ENCODE measurements at regions of chr18 and their contacts with region 1.

Region 1: GRCh38 chr18:42114310-42114943 is 159.4 kb downstream of the PIK3C3 start:
- DNase-seq: peak; percentile 56
- H3K4me3 ChIP-seq: no peak overlapping the region
- H3K27ac ChIP-seq: no peak overlapping the region
- H3K27me3 ChIP-seq: no peaks in the 10 kb centered on the region
- CTCF ChIP-seq: peak; percentile 92

Region 2: GRCh38 chr18:41936471-41937134 is 177.8 kb before region 1 on chr18:
- CTCF ChIA-PET with region 1: no interaction called
- POLR2A ChIA-PET with region 1: no interaction called
- DNase-seq: no peak
- H3K4me3 ChIP-seq: no peak overlapping the region
- H3K27ac ChIP-seq: peak overlapping the region; percentile 41
- H3K27me3 ChIP-seq: no peaks in the 10 kb centered on the region
- CTCF ChIP-seq: no peak

Region 3: DNA sequence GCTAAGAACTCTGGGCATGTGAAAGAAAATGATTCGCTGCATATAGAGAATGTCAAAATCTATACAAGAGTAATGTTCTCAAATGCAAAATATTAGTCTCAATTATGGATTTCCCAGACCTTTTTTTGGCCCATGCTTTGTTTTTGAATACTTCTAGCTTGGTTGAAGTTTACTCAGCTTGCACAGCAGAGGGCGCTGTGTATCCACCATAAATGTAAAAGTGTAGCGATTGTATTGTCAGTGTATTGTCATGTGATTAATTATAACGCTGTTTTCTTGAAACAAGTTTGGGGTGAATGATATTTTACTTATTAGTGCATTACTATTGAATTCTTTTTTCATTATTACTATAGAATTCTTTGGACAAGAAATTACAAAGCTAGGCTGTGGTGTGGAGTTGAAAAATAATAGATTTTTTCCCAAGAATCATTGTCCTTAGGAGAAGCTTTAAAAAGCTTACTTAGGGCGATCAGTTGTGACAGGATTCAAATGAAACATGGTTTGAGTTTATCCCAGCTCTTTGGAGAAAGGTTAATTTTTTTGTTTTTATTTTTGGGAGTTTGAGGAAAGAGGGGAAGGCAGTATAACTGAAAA is 61.1 kb before region 1 on chr18:
- CTCF ChIA-PET with region 1: interaction called, 91 read pairs
- POLR2A ChIA-PET with region 1: no interaction called
- DNase-seq: no peak
- H3K4me3 ChIP-seq: no peak overlapping the region
- H3K27ac ChIP-seq: no peak overlapping the region
- H3K27me3 ChIP-seq: no peaks in the 10 kb centered on the region
- CTCF ChIP-seq: peak; percentile 88

Region 4: GRCh38 chr18:42078711-42079110 is 35.7 kb before region 1 on chr18:
- CTCF ChIA-PET with region 1: interaction called, 23 read pairs
- POLR2A ChIA-PET with region 1: no interaction called
- DNase-seq: peak; percentile 2
- H3K4me3 ChIP-seq: no peak overlapping the region
- H3K27ac ChIP-seq: no peak overlapping the region
- H3K27me3 ChIP-seq: no peaks in the 10 kb centered on the region
- CTCF ChIP-seq: no peak

Region 5: GRCh38 chr18:42100911-42101310 is 13.5 kb before region 1 on chr18:
- CTCF ChIA-PET with region 1: interaction called, 30 read pairs
- POLR2A ChIA-PET with region 1: no interaction called
- DNase-seq: no peak
- H3K4me3 ChIP-seq: no peak overlapping the region
- H3K27ac ChIP-seq: no peak overlapping the region
- H3K27me3 ChIP-seq: no peaks in the 10 kb centered on the region
- CTCF ChIP-seq: no peak

Region 6: GRCh38 chr18:42274488-42275137 is 160.2 kb after region 1 on chr18:
- CTCF ChIA-PET with region 1: interaction called, 95 read pairs
- POLR2A ChIA-PET with region 1: no interaction called
- DNase-seq: no peak
- H3K4me3 ChIP-seq: no peak overlapping the region
- H3K27ac ChIP-seq: no peak overlapping the region
- H3K27me3 ChIP-seq: no peaks in the 10 kb centered on the region
- CTCF ChIP-seq: peak; percentile 10; the same call in 1 of the 2 replicates

Region 7: GRCh38 chr18:43271593-43272432 is 1157.4 kb after region 1 on chr18:
- CTCF ChIA-PET with region 1: interaction called, 179 read pairs
- POLR2A ChIA-PET with region 1: no interaction called
- DNase-seq: peak; percentile 6
- H3K4me3 ChIP-seq: no peak overlapping the region
- H3K27ac ChIP-seq: no peak overlapping the region
- H3K27me3 ChIP-seq: no peaks in the 10 kb centered on the region
- CTCF ChIP-seq: peak; percentile 78